ENCODE measurements at regions of chr11 and their contacts with region 1.

Region 1: DNA sequence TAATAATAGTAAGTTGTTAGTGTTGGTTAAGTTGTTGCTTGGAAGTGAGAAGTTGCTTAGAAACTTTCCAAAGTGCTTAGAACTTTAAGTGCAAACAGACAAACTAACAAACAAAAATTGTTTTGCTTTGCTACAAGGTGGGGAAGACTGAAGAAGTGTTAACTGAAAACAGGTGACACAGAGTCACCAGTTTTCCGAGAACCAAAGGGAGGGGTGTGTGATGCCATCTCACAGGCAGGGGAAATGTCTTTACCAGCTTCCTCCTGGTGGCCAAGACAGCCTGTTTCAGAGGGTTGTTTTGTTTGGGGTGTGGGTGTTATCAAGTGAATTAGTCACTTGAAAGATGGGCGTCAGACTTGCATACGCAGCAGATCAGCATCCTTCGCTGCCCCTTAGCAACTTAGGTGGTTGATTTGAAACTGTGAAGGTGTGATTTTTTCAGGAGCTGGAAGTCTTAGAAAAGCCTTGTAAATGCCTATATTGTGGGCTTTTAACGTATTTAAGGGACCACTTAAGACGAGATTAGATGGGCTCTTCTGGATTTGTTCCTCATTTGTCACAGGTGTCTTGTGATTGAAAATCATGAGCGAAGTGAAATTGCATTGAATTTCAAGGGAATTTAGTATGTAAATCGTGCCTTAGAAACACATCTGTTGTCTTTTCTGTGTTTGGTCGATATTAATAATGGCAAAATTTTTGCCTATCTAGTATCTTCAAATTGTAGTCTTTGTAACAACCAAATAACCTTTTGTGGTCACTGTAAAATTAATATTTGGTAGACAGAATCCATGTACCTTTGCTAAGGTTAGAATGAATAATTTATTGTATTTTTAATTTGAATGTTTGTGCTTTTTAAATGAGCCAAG is 2.7 kb downstream of the NEAT1 start:
- DNase-seq: peak; percentile 87
- ATAC-seq: peak; percentile 18
- H3K4me3 Mint-ChIP-seq: peak overlapping the region; percentile 100
- H3K27ac Mint-ChIP-seq: peak overlapping the region; percentile 99
- H3K4me1 Mint-ChIP-seq: peaks cover 51% of the 10 kb centered on the region
- H3K27me3 Mint-ChIP-seq: peaks cover 6% of the 10 kb centered on the region

Region 2: DNA sequence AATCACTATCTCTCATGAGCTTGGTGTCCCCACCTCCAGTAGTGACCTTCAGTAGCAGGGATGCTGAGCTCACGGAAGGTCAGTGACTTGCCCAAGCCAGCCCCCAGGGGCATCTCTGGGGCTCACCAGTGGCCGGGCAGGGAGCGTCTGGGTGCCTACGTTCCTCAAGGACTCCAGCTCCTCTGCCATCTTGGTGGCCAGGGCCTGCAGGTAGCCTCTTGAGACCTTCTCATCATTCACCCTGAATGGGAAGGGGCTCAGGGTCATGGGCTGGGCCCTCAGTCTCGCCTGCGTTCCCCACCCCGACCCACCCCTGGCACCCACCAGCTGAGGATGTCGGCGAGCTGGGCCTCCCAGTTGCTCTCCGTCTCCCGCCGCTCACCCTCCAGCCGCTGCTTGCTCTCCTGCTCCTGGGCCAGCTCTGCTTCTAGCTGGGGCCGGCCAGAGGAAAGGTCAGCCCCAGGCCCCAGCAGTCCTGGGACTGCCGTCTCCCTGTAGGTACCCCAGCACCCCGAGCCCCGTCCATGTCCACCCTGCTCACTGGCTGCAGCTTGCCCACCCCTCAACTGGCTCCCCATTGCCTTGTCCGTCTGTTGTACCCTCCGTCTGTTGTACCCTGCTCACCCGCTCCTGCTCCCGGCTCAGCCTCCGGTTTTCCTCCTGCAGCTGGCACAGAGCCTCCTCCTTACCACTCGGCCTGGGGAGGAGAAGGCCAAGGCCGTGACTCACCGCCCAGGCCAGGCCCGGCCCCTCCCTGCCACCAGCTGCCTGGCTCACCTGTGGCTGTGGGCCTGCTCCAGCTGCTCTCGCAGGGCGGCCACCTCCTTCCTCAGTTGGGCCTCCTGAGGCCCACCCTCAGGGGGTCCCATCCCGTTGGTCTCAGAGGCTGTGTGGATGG is 590.4 kb before region 1 on chr11:
- CTCF ChIA-PET with region 1: no interaction called
- POLR2A ChIA-PET with region 1: no interaction called
- intact Hi-C with region 1: no loop called
- DNase-seq: no peak
- ATAC-seq: no peak
- H3K4me3 Mint-ChIP-seq: no peak overlapping the region
- H3K27ac Mint-ChIP-seq: no peak overlapping the region
- H3K4me1 Mint-ChIP-seq: no peaks in the 10 kb centered on the region
- H3K27me3 Mint-ChIP-seq: no peaks in the 10 kb centered on the region

Region 3: GRCh38 chr11:65403607-65404121 is 21.7 kb before region 1 on chr11:
- CTCF ChIA-PET with region 1: no interaction called
- POLR2A ChIA-PET with region 1: no interaction called
- intact Hi-C with region 1: no loop called
- DNase-seq: no peak
- ATAC-seq: no peak
- H3K4me3 Mint-ChIP-seq: no peak overlapping the region
- H3K27ac Mint-ChIP-seq: no peak overlapping the region
- H3K4me1 Mint-ChIP-seq: peaks cover 6% of the 10 kb centered on the region
- H3K27me3 Mint-ChIP-seq: no peaks in the 10 kb centered on the region

Region 4: DNA sequence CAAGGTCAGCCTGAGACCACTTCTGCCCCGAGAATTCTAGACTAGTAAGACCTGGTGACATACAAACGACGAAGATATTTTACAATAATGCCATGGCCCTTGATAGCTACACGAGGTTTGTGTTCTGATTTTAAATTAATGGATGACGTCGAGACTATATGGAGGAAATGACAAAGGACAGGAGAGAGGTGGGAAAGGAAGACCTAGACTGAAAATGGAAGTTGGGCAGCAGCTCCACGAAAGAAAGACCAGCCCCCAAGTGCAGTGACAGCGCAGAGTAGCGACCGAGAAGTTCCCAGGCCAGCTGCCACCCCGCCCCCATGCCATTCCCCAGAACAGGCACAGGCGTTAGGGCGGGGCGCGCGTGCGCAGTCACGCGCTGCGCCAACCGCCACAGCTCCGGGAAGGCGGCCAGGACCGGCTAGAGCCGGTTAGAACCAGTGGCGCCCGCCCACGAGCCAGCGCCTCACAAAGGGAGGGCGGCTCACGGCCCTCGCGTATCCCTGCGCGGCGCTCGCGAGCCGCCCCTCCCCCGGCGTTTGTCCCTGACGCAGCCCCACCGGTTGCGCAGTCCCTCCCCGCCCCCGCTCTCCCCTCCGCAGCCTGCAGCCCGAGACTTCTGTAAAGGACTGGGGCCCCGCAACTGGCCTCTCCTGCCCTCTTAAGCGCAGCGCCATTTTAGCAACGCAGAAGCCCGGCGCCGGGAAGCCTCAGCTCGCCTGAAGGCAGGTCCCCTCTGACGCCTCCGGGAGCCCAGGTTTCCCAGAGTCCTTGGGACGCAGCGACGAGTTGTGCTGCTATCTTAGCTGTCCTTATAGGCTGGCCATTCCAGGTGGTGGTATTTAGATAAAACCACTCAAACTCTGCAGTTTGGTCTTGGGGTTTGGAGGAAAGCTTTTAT is 72.1 kb after region 1 on chr11:
- CTCF ChIA-PET with region 1: interaction called, 90 read pairs
- POLR2A ChIA-PET with region 1: interaction called, 1,637 read pairs
- intact Hi-C with region 1: loop called (anchors 1 kb)
- DNase-seq: peak; percentile 100
- ATAC-seq: peak; percentile 70
- H3K4me3 Mint-ChIP-seq: no peak overlapping the region
- H3K27ac Mint-ChIP-seq: peak overlapping the region; percentile 96
- H3K4me1 Mint-ChIP-seq: peaks cover 41% of the 10 kb centered on the region
- H3K27me3 Mint-ChIP-seq: no peaks in the 10 kb centered on the region

Measured in activated CD4-positive, alpha-beta T cell treated with anti-CD3 and anti-CD28 coated beads for 36 hours (primary cell).